Endothelial cell of umbilical vein (primary cell): ENCODE measurements at regions of chr1 and their contacts with region 1.

Region 1: GRCh38 chr1:99481391-99481996 is 164.4 kb upstream of the PALMD start:
- DNase-seq: peak; percentile 75
- H3K4me3 ChIP-seq: no peak overlapping the region
- H3K27ac ChIP-seq: no peak overlapping the region
- H3K4me1 ChIP-seq: no peaks in the 10 kb centered on the region
- H3K27me3 ChIP-seq: no peaks in the 10 kb centered on the region
- CTCF ChIP-seq: peak; percentile 51 to 52
- POLR2A ChIP-seq: no peak

Region 2: GRCh38 chr1:98749152-98749756 is 732.2 kb before region 1 on chr1:
- CTCF ChIA-PET with region 1: interaction called, 10 read pairs
- POLR2A ChIA-PET with region 1: no interaction called
- dilution Hi-C with region 1: no loop called
- intact Hi-C with region 1: no loop called
- DNase-seq: peak; percentile 32
- H3K4me3 ChIP-seq: no peak overlapping the region
- H3K27ac ChIP-seq: no peak overlapping the region
- H3K4me1 ChIP-seq: no peaks in the 10 kb centered on the region
- H3K27me3 ChIP-seq: no peaks in the 10 kb centered on the region
- CTCF ChIP-seq: peak; percentile 10 to 22
- POLR2A ChIP-seq: no peak

Region 3: DNA sequence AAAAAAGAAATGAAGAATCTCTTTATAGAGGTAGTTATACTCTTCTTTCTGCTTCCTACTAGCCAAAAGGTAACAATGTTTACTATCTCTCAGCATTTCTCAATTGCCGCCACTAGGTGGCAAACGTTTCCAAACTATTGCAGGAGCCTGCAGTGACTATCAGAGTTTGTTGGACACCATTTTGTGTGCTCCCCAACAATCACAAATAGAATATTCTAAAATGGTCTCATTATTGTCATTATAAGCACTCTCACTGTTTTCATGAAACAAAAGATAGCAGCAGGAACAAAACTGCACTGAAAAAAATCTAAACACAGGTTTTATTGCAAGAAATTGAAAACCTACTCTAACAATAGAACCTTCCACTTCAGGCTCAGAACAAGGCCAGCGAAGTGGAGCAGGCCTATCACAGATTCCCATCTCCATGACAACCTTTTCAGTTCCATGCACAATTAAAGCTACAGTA is 301.1 kb before region 1 on chr1:
- CTCF ChIA-PET with region 1: interaction called, 45 read pairs
- POLR2A ChIA-PET with region 1: no interaction called
- dilution Hi-C with region 1: no loop called
- intact Hi-C with region 1: loop called (anchors 1 kb)
- DNase-seq: peak; percentile 90
- H3K4me3 ChIP-seq: no peak overlapping the region
- H3K27ac ChIP-seq: no peak overlapping the region
- H3K4me1 ChIP-seq: no peaks in the 10 kb centered on the region
- H3K27me3 ChIP-seq: no peaks in the 10 kb centered on the region
- CTCF ChIP-seq: peak; percentile 57 to 68
- POLR2A ChIP-seq: no peak

Region 4: DNA sequence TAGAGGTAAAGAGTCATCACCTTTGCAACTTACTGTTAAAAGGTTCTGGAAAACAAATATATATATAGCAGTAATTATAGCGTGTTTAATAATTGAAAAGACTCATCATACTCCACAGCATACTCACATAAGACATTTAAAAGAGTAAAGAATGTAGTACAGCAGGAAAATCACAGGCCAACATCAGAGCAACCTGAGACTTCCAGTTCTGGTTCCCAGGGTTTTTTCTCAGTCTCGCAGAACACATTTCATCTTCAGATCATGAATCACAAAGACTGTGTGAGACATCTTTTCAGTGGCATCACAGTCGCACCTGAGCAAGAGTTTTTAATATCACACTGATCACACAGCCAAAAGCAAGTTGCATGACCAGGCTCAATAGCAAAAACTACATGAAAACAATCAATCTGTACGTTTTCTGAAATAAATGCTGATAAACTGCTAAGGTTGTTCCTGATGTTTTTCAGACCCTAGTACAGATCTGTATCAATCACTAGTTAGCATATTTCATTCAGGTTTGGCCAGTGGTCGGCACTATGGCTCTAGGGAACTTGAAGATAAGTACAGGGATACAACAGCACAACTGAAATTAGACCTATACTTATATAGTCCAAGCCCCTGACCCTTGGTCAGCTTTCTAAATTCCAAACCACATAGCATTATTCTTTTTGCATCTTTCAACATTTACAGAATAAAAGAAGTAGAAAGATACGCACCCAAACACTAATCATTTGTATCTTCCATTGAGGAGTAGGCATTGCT is 74.7 kb before region 1 on chr1:
- CTCF ChIA-PET with region 1: interaction called, 3 read pairs
- POLR2A ChIA-PET with region 1: no interaction called
- dilution Hi-C with region 1: no loop called
- intact Hi-C with region 1: loop called (anchors 5 kb)
- DNase-seq: peak; percentile 17
- H3K4me3 ChIP-seq: no peak overlapping the region
- H3K27ac ChIP-seq: no peak overlapping the region
- H3K4me1 ChIP-seq: no peaks in the 10 kb centered on the region
- H3K27me3 ChIP-seq: peaks cover 0 to 2% of the 10 kb centered on the region in 2 experiments
- CTCF ChIP-seq: no peak
- POLR2A ChIP-seq: no peak

Region 5: DNA sequence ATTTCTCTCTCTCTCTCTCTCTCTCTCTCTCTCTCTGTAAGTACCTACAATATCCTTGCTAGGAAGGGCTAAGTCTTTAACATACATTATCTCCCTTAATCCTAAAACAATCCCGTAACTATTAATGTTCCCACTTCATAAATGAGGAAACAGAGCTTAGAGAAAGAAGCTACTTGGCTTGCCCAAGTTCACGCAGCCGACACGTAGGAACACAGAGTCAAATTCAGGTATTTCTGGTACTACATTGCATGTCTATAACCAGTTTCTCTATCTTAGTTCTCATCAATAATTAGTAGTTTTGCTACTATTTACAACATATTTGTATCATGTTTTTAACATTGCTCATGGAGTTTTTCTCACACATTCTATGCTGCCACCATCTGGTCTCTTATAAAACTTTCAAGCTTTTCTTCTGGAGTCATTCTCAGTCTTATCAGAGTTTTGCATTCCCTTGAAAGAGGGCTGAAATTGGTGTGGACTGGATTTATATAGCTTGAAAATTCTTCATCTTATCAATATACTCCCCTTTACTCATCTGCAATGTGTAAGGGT is 45.5 kb after region 1 on chr1:
- CTCF ChIA-PET with region 1: interaction called, 31 read pairs
- POLR2A ChIA-PET with region 1: no interaction called
- dilution Hi-C with region 1: no loop called
- intact Hi-C with region 1: no loop called
- DNase-seq: peak; percentile 57
- H3K4me3 ChIP-seq: no peak overlapping the region
- H3K27ac ChIP-seq: no peak overlapping the region
- H3K4me1 ChIP-seq: no peaks in the 10 kb centered on the region
- H3K27me3 ChIP-seq: no peaks in the 10 kb centered on the region
- CTCF ChIP-seq: peak in 1 of 2 donors; percentile 21
- POLR2A ChIP-seq: no peak

Region 6: GRCh38 chr1:99599678-99600175 is 118.2 kb after region 1 on chr1:
- CTCF ChIA-PET with region 1: interaction called, 6 read pairs
- POLR2A ChIA-PET with region 1: no interaction called
- dilution Hi-C with region 1: no loop called
- intact Hi-C with region 1: loop called (anchors 2 kb)
- DNase-seq: peak; percentile 97
- H3K4me3 ChIP-seq: no peak overlapping the region
- H3K27ac ChIP-seq: peak overlapping the region; percentile 93
- H3K4me1 ChIP-seq: peaks cover 65% of the 10 kb centered on the region
- H3K27me3 ChIP-seq: no peaks in the 10 kb centered on the region
- CTCF ChIP-seq: no peak
- POLR2A ChIP-seq: no peak

Region 7: DNA sequence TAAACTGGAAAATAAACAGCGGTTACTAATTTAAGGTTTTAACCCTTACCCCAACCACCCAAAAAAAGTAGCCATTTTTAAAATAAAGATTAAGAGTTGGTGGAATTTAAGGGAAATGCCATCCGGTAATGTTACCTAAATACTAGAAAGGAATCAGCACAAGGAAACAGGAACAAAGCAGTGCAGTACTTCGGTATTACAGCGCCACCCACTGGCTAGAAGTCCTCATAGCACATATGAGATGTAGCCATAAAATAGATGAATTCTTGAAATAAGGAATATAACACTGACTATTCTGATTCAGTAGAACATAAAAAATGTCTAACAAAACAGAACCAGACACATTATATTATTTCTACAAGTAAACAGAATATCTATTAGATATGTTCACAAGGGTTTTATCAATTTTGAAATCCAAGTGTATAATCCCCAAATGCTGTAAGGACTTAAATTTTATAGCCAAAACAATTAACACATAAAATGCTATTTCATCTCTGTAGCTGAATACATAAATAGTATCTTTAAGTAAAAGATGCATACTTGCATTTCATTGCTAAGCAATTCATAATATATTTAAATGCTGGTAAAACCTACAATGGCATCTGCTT is 226.1 kb after region 1 on chr1:
- CTCF ChIA-PET with region 1: interaction called, 29 read pairs
- POLR2A ChIA-PET with region 1: no interaction called
- dilution Hi-C with region 1: no loop called
- intact Hi-C with region 1: loop called (anchors 1 kb)
- DNase-seq: peak; percentile 86
- H3K4me3 ChIP-seq: no peak overlapping the region
- H3K27ac ChIP-seq: no peak overlapping the region
- H3K4me1 ChIP-seq: peaks cover 4% of the 10 kb centered on the region
- H3K27me3 ChIP-seq: no peaks in the 10 kb centered on the region
- CTCF ChIP-seq: peak; percentile 58 to 71
- POLR2A ChIP-seq: no peak